ENCODE measurements at regions of chr14 and their contacts with region 1.

Region 1: GRCh38 chr14:67187210-67187609 is 2.0 kb upstream of the GARIN2 start:
- DNase-seq: peak; percentile 84
- H3K4me3 ChIP-seq: no peak overlapping the region
- H3K27ac ChIP-seq: peak overlapping the region; percentile 34
- H3K4me1 ChIP-seq: peaks cover 37% of the 10 kb centered on the region
- H3K27me3 ChIP-seq: no peaks in the 10 kb centered on the region
- CTCF ChIP-seq: no peak

Region 2: GRCh38 chr14:67221248-67221981 is 34.2 kb after region 1 on chr14:
- CTCF ChIA-PET with region 1: no interaction called
- dilution Hi-C with region 1: no loop called
- in situ Hi-C with region 1: no loop called
- intact Hi-C with region 1: loop called (anchors 5 kb)
- DNase-seq: peak; percentile 83
- H3K4me3 ChIP-seq: no peak overlapping the region
- H3K27ac ChIP-seq: no peak overlapping the region
- H3K4me1 ChIP-seq: peaks cover 25% of the 10 kb centered on the region
- H3K27me3 ChIP-seq: no peaks in the 10 kb centered on the region
- CTCF ChIP-seq: no peak

Region 3: DNA sequence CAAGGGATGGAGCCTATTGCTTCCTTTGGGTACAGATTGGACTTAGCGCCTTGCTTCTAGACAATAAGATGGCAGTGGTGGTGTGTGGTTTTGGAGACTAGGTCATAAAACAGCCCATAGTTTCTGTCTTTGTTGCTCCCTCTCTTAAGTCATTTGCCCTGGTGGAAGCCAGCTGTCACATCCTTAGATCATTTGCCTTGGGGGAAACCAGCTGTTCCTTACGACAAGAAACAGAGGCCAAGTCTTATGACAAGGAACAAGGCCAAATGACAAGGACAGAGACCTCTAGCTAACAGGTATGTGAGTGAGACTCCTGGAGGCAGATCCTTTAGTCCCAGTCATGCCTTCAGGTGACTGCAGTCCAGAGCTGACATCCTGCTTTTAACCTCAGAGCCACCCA is 44.9 kb after region 1 on chr14:
- CTCF ChIA-PET with region 1: no interaction called
- dilution Hi-C with region 1: loop called (anchors 10 kb)
- in situ Hi-C with region 1: no loop called
- intact Hi-C with region 1: no loop called
- DNase-seq: no peak
- H3K4me3 ChIP-seq: no peak overlapping the region
- H3K27ac ChIP-seq: no peak overlapping the region
- H3K4me1 ChIP-seq: no peaks in the 10 kb centered on the region
- H3K27me3 ChIP-seq: no peaks in the 10 kb centered on the region
- CTCF ChIP-seq: no peak

Measured in mammary epithelial cell (primary cell).